Activated T-helper 2 cell treated with anti-CD3 and anti-CD28 coated beads, Interferon-gamma antibody, Interleukin-2, Interleukin-4, amounts not matched to agents 10 μg/mL and 5 μg/mL and 100 μg/mL, durations not matched to agents 14 hours and 24 hours and 36 hours (primary cell): ENCODE measurements at regions of chr2 and their contacts with region 1.

Region 1: DNA sequence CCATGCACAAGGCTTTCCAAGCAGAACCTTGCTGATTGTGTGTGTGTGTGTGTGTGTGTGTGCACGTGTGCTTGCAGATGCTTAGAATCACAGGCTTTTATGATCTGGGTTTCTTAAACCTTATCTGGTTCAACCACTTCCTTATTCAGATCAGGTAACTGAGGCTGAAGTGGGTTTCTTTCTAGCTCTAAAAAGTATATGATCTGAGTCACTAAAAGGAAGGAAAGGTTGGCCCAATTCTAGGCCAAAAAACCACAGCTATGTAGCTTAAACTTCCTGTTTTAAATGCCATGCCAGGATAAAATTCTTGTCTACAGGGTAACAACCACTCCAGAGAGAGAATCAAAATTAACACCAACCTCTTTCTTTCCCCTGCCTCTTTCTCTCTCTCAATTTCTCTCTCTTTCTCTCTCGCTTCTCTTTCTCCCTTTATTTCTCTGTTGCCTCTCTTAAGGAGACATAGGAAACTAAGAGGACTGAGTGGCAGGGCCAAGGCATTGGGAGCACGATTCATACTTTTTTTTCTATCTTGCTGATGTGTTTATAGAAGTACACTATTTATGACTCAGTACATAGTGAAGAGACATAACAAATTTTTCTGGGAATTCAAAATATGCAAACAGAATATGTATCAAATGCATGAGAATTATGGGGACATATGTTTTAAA is 140.3 kb downstream of the TRIB2 start:
- DNase-seq: peak; percentile 28
- H3K4me3 Mint-ChIP-seq: no peak overlapping the region
- H3K27ac Mint-ChIP-seq: no peak overlapping the region
- H3K4me1 Mint-ChIP-seq: peaks cover 20% of the 10 kb centered on the region
- H3K27me3 Mint-ChIP-seq: peaks cover 3% of the 10 kb centered on the region

Region 2: DNA sequence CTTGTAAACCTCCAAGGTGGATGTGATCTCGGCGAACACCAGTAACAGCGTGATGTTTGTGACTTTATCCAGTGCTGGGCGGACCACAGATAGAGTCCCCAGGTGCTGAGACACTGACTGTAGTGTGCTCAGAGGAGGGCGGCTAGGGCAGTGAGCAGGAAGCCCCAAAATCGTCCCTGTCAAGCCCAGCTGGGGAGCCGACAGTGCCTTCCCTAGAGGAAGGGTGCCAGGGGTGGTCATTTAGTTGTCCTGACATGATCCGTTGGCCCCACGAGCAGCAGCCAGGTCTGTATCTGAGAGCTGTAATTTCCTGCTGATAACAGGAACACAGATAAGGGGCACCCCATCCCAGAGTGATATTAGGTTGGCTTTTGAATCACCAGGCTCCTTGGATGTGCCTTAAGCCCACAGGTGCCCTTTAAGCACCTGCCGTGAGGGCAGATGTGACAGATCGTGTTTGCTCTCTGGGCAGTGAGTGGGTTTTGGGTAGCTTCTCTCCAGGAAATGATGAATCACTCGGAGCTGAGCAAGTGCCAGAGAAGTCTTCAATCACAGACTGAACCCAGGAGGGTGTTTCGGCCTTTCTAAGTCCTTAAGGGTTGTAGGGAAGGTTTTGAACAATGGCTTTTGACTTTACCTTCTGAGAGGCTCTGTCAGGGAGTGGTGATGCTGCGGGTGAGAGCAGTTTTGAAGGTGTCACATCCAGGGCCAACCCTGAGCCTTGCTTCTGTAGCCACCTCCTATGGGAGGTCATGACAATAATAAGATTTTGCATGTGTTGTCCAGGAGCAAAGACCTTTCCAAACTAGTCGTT is 1103.0 kb before region 1 on chr2:
- intact Hi-C with region 1: loop called (anchors 10 kb)
- DNase-seq: peak; percentile 52
- H3K4me3 Mint-ChIP-seq: peak overlapping the region; percentile 74
- H3K27ac Mint-ChIP-seq: peak overlapping the region; percentile 93
- H3K4me1 Mint-ChIP-seq: peaks cover 75% of the 10 kb centered on the region
- H3K27me3 Mint-ChIP-seq: no peaks in the 10 kb centered on the region

Region 3: GRCh38 chr2:12430407-12431133 is 426.5 kb before region 1 on chr2:
- intact Hi-C with region 1: loop called (anchors 5 kb)
- DNase-seq: no peak
- H3K4me3 Mint-ChIP-seq: peak overlapping the region; percentile 18
- H3K27ac Mint-ChIP-seq: peak overlapping the region; percentile 63
- H3K4me1 Mint-ChIP-seq: peaks cover 29% of the 10 kb centered on the region
- H3K27me3 Mint-ChIP-seq: no peaks in the 10 kb centered on the region

Region 4: GRCh38 chr2:12675352-12675795 is 181.7 kb before region 1 on chr2:
- intact Hi-C with region 1: no loop called
- DNase-seq: no peak
- H3K4me3 Mint-ChIP-seq: no peak overlapping the region
- H3K27ac Mint-ChIP-seq: no peak overlapping the region
- H3K4me1 Mint-ChIP-seq: no peaks in the 10 kb centered on the region
- H3K27me3 Mint-ChIP-seq: peaks cover 10% of the 10 kb centered on the region

Region 5: GRCh38 chr2:12931186-12931844 is 74.2 kb after region 1 on chr2:
- intact Hi-C with region 1: loop called (anchors 5 kb)
- DNase-seq: no peak
- H3K4me3 Mint-ChIP-seq: no peak overlapping the region
- H3K27ac Mint-ChIP-seq: no peak overlapping the region
- H3K4me1 Mint-ChIP-seq: peaks cover 12% of the 10 kb centered on the region
- H3K27me3 Mint-ChIP-seq: peaks cover 47% of the 10 kb centered on the region

Region 6: DNA sequence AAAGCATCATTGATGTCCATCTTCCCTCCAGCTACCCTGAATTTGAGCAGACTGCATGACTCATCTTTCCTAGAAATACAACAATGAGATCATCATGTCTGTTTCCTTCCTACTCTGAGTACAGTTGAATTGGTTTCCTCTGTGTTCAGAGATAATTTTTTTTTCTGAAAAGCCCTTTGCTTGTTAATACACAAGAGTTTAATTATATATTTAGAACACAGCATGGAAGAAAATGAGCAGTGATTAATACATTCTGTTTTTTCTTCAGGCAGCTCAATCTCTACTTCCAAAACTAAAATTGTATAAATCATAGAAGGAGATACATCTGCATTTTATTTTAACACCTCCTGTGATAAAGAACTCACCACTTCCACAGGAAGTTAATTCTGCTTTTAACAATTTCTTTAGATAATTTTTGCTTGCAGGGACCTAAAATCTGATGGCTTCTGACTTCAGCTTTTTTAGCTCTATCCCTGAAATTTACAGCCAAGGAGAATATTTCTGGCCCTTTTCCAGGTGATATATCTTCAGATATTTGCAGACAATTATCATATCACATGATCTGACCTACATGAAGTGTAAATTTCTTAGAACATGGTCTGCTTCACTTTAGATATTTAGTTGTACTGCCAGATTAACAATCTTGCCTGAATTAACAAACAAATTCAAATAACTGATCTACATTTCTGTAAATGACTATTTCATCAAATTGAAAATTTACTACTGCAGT is 108.6 kb after region 1 on chr2:
- intact Hi-C with region 1: loop called (anchors 2 kb)
- DNase-seq: no peak
- H3K4me3 Mint-ChIP-seq: peak overlapping the region; percentile 2
- H3K27ac Mint-ChIP-seq: peak overlapping the region; percentile 48
- H3K4me1 Mint-ChIP-seq: peaks cover 49% of the 10 kb centered on the region
- H3K27me3 Mint-ChIP-seq: peaks cover 11% of the 10 kb centered on the region